ENCODE measurements at regions of chr2 and their contacts with region 1.

Region 1: DNA sequence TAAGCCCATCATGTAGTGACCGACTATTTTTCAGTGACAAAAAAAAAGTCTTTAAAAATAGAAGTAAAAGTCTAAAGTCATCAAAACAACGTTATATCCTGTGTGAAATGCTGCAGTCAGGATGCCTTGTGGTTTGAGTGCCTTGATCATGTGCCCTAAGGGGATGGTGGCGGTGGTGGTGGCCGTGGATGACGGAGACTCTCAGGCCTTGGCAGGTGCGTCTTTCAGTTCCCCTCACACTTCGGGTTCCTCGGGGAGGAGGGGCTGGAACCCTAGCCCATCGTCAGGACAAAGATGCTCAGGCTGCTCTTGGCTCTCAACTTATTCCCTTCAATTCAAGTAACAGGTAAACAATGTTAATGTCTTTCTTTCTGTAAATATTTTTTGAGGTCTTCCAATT is at the start of gene CD28:
- DNase-seq: peak; percentile 97
- H3K4me3 Mint-ChIP-seq: peak within 1 kb of the TSS; percentile 86
- H3K27ac Mint-ChIP-seq: peak within 1 kb of the TSS; percentile 99
- H3K4me1 Mint-ChIP-seq: peaks cover 49% of the 10 kb centered on the region
- H3K27me3 Mint-ChIP-seq: no peaks in the 10 kb centered on the region
- total RNA-seq, gene CD28: 279 to 285 TPM

Region 2: GRCh38 chr2:203578759-203579643 is 127.4 kb before region 1 on chr2:
- CTCF ChIA-PET with region 1: no interaction called
- POLR2A ChIA-PET with region 1: interaction called, 4 read pairs
- intact Hi-C with region 1: loop called (anchors 1 kb)
- DNase-seq: peak; percentile 72
- H3K4me3 Mint-ChIP-seq: no peak overlapping the region
- H3K27ac Mint-ChIP-seq: peak overlapping the region; percentile 16
- H3K4me1 Mint-ChIP-seq: peaks cover 29% of the 10 kb centered on the region
- H3K27me3 Mint-ChIP-seq: peaks cover 12% of the 10 kb centered on the region

Region 3: DNA sequence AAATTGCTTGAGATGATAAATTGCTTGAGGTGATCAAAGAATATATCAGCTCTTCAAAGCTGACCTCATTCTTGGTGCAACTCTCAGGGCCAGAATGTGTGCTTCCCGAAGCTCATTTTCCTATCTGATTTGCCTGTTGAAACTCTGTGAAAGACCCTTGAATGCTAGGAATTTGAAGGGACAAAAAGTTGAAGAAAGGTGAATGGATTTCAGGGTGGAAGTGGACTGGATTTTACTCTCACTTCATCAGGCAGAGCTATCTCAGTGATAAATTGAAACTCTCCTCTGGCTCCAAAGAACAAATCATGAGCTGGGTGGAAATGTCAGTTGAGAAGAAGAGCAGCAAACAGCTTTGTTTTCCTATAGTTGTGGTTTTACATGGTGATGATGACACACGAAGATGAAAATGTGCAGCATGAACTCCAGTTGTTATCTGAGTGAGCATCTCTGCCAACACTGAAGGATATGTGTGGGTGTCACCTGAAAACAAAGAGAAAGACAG is 34.4 kb after region 1 on chr2:
- CTCF ChIA-PET with region 1: interaction called, 16 read pairs
- POLR2A ChIA-PET with region 1: interaction called, 130 read pairs
- intact Hi-C with region 1: loop called (anchors 1 kb)
- DNase-seq: peak; percentile 65
- H3K4me3 Mint-ChIP-seq: peak overlapping the region; percentile 58
- H3K27ac Mint-ChIP-seq: peak overlapping the region; percentile 99
- H3K4me1 Mint-ChIP-seq: peaks cover 90% of the 10 kb centered on the region
- H3K27me3 Mint-ChIP-seq: no peaks in the 10 kb centered on the region

Region 4: GRCh38 chr2:203858176-203858575 is 151.8 kb after region 1 on chr2:
- CTCF ChIA-PET with region 1: no interaction called
- POLR2A ChIA-PET with region 1: interaction called, 26 read pairs
- intact Hi-C with region 1: no loop called
- DNase-seq: peak; percentile 66
- H3K4me3 Mint-ChIP-seq: peak overlapping the region; percentile 25
- H3K27ac Mint-ChIP-seq: peak overlapping the region; percentile 81
- H3K4me1 Mint-ChIP-seq: peaks cover 84% of the 10 kb centered on the region
- H3K27me3 Mint-ChIP-seq: no peaks in the 10 kb centered on the region

Region 5: GRCh38 chr2:203940039-203940438 is 233.6 kb after region 1 on chr2:
- CTCF ChIA-PET with region 1: no interaction called
- POLR2A ChIA-PET with region 1: interaction called, 127 read pairs
- intact Hi-C with region 1: loop called (anchors 1 kb)
- DNase-seq: no peak
- H3K4me3 Mint-ChIP-seq: peak overlapping the region; percentile 97
- H3K27ac Mint-ChIP-seq: peak overlapping the region; percentile 97
- H3K4me1 Mint-ChIP-seq: peaks cover 45% of the 10 kb centered on the region
- H3K27me3 Mint-ChIP-seq: no peaks in the 10 kb centered on the region

Measured in activated CD4-positive, alpha-beta memory T cell treated with anti-CD3 and anti-CD28 coated beads for 36 hours (primary cell).